ENCODE measurements at regions of chr6 and their contacts with region 1.

Region 1: GRCh38 chr6:131275273-131275672 is 140.0 kb downstream of the AKAP7 start:
- DNase-seq: no peak
- ATAC-seq: no peak
- H3K4me3 ChIP-seq: no peak overlapping the region
- H3K4me3 Mint-ChIP-seq: no peak overlapping the region
- H3K27ac ChIP-seq: no peak overlapping the region
- H3K27ac Mint-ChIP-seq: no peak overlapping the region
- H3K4me1 ChIP-seq: peaks cover 3% of the 10 kb centered on the region
- H3K4me1 Mint-ChIP-seq: peaks cover 37% of the 10 kb centered on the region
- H3K27me3 ChIP-seq: no peaks in the 10 kb centered on the region
- H3K27me3 Mint-ChIP-seq: no peaks in the 10 kb centered on the region
- CTCF ChIP-seq: no peak

Region 2: DNA sequence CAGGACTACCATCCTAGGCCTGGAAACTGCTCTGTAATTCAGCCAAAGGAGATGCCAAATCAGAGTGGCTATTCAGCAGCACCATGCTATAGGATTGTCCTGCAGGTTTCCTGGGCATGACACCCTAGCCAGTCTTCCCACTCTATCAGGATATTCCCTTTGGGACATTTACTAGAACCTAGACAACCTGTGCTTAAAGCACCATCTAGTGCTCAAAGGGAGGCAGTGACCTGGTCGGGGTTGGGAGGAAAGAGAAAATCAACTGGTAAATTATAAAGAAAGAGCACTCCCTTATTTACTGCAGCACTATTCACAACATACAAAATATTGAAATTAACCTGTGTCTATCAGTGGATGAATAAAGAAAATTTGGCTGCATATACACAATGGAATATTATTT is 515.3 kb before region 1 on chr6:
- CTCF ChIA-PET with region 1: no interaction called
- POLR2A ChIA-PET with region 1: no interaction called
- intact Hi-C with region 1: no loop called
- DNase-seq: no peak
- ATAC-seq: no peak
- H3K4me3 ChIP-seq: no peak overlapping the region
- H3K4me3 Mint-ChIP-seq: no peak overlapping the region
- H3K27ac ChIP-seq: no peak overlapping the region
- H3K27ac Mint-ChIP-seq: no peak overlapping the region
- H3K4me1 ChIP-seq: no peaks in the 10 kb centered on the region
- H3K4me1 Mint-ChIP-seq: peaks cover 12% of the 10 kb centered on the region
- H3K27me3 ChIP-seq: no peaks in the 10 kb centered on the region
- H3K27me3 Mint-ChIP-seq: peaks cover 2% of the 10 kb centered on the region
- CTCF ChIP-seq: no peak

Region 3: DNA sequence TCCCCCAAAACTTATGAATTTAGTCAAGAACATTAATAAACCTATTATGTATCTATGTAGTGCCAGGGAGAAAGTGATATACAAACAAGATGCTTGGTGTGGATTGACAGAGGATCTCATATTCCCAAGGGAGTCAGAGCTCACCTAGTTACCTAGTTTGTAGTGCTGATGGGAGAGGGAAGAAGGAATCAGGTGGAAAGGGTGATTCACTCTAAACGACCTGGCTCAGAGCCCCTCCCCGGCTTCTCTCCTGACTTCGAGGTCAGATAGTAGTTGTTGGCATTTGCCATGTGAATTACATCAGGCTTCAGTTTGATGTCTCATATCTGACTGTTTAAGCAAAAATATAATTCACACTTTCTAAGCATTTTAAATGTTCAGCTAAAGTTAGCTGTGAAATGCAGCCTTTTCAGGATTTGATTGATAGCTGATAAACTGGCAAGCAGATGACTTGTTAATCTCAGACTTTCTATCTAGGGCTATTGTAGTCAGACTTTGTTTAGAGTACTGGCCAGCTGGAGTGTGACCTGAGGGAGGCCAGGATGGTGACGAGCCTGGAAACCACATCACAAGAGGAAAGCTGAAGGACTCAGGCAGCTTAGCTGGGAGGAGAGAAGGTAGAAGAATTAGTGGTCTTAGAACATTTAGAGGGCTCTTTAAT is 16.3 kb before region 1 on chr6:
- CTCF ChIA-PET with region 1: interaction called, 5 read pairs
- POLR2A ChIA-PET with region 1: interaction called, 3 read pairs
- intact Hi-C with region 1: loop called (anchors 1 to 2 kb)
- DNase-seq: no peak
- ATAC-seq: no peak
- H3K4me3 ChIP-seq: no peak overlapping the region
- H3K4me3 Mint-ChIP-seq: no peak overlapping the region
- H3K27ac ChIP-seq: no peak overlapping the region
- H3K27ac Mint-ChIP-seq: peak overlapping the region; percentile 60
- H3K4me1 ChIP-seq: peaks cover 12% of the 10 kb centered on the region
- H3K4me1 Mint-ChIP-seq: peaks cover 48% of the 10 kb centered on the region
- H3K27me3 ChIP-seq: no peaks in the 10 kb centered on the region
- H3K27me3 Mint-ChIP-seq: no peaks in the 10 kb centered on the region
- CTCF ChIP-seq: no peak

Region 4: GRCh38 chr6:131317516-131317915 is 42.2 kb after region 1 on chr6:
- CTCF ChIA-PET with region 1: no interaction called
- POLR2A ChIA-PET with region 1: no interaction called
- intact Hi-C with region 1: no loop called
- DNase-seq: no peak
- ATAC-seq: no peak
- H3K4me3 ChIP-seq: no peak overlapping the region
- H3K4me3 Mint-ChIP-seq: no peak overlapping the region
- H3K27ac ChIP-seq: no peak overlapping the region
- H3K27ac Mint-ChIP-seq: no peak overlapping the region
- H3K4me1 ChIP-seq: no peaks in the 10 kb centered on the region
- H3K4me1 Mint-ChIP-seq: no peaks in the 10 kb centered on the region
- H3K27me3 ChIP-seq: no peaks in the 10 kb centered on the region
- H3K27me3 Mint-ChIP-seq: no peaks in the 10 kb centered on the region
- CTCF ChIP-seq: no peak

Measured in CD8-positive, alpha-beta T cell (primary cell).